Prostate gland (tissue), 2 donors: ENCODE measurements at regions of chr10 and their contacts with region 1.

Region 1: DNA sequence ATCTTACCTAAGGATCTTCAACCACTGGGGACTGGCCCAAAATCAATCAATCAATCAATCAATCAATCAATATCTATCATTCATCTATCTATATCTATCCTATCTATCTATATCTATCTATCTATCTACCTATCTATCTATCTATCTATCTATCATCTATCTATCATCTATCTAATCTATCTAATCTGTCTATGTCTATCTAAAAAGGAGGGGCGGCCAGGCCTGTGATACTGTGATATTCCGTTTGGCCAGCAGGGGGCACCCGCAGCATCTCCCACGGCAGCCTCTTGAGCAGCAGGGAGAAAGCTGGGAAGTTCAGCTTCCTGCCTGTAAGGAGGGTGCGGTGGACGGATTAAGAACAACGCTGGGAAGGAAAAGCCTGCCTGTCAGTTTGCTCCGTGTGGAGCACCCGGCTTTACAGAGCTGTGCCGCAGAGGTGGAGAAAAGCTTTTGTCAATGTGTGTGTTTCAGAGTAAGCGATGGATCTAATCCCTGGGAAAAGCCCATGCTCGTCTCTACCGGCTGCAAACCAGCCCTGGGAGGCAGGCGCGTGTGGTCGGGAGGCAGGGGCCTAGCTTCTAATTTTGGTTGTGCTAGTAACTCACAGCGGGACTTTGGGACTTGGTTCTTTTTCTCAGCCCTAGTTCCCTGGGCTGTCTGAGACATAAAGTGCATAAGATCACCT is 125.0 kb downstream of the SH2D4B start:
- DNase-seq: peak; percentile 58
- H3K4me3 ChIP-seq: no peak overlapping the region
- H3K27ac ChIP-seq: peak overlapping the region in 1 of 2 donors; percentile 21
- H3K4me1 ChIP-seq: no peaks in the 10 kb centered on the region
- H3K27me3 ChIP-seq: no peaks in the 10 kb centered on the region
- CTCF ChIP-seq: peak; percentile 74 to 88 (median 79)
- POLR2A ChIP-seq: no peak

Region 2: GRCh38 chr10:80552151-80552646 is 110.5 kb before region 1 on chr10:
- intact Hi-C with region 1: no loop called
- DNase-seq: no peak
- H3K4me3 ChIP-seq: no peak overlapping the region
- H3K27ac ChIP-seq: no peak overlapping the region
- H3K4me1 ChIP-seq: no peaks in the 10 kb centered on the region
- H3K27me3 ChIP-seq: no peaks in the 10 kb centered on the region
- CTCF ChIP-seq: no peak
- POLR2A ChIP-seq: no peak

Region 3: GRCh38 chr10:80599424-80599847 is 63.3 kb before region 1 on chr10:
- intact Hi-C with region 1: no loop called
- DNase-seq: no peak
- H3K4me3 ChIP-seq: no peak overlapping the region
- H3K27ac ChIP-seq: no peak overlapping the region
- H3K4me1 ChIP-seq: no peaks in the 10 kb centered on the region
- H3K27me3 ChIP-seq: no peaks in the 10 kb centered on the region
- CTCF ChIP-seq: peak in 2 of 4 experiments; percentile 19 to 28
- POLR2A ChIP-seq: no peak

Region 4: DNA sequence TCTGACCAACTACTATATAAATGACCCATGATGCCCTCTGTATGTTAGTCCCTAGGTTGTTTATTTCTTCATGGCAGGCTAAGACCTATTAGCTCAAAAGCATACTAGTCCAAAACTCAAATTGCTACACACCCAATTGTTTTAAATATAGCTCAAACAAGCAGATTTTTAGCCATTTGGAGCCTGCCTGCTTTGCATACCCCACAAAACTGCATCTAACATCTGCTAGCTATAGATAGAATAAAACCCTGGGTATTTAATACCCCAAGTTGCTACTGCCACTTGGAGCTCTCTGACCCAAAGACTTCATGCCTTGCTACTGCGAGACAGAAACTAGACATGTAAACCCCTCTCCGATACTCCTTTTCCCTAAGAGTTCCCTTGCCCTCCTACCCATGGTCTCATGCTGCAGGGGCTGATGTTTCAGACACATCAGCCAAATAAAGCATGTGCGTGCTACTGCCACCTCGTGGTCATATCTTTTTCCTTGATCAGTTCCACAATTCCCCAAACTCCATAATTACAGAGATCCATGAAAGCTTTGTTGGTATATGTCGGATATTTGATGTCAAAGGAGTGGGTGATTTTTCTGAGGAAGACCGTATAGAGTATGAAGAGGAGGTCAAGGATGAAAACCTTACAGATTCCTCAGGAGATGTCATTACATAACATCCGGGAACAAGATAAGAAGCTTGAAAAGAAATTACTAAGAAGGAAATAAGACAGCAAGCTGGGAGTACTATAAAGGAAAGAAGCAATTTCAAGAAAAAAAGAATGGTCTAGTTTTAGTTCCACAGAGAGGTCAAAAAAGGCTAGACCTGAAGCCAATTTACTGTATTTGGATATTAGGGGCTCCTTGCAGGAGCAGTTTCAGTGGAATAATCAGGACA is 261.6 kb after region 1 on chr10:
- intact Hi-C with region 1: loop called (anchors 10 kb)
- DNase-seq: peak; percentile 37
- H3K4me3 ChIP-seq: no peak overlapping the region
- H3K27ac ChIP-seq: no peak overlapping the region
- H3K4me1 ChIP-seq: no peaks in the 10 kb centered on the region
- H3K27me3 ChIP-seq: no peaks in the 10 kb centered on the region
- CTCF ChIP-seq: peak; percentile 10 to 59 (median 46)
- POLR2A ChIP-seq: no peak